ENCODE measurements at regions of chr10 and their contacts with region 1.

Region 1: GRCh38 chr10:30591249-30591670 is 38.3 kb downstream of the LYZL2 start:
- DNase-seq: peak; percentile 62
- H3K4me3 ChIP-seq: no peak overlapping the region
- H3K27ac ChIP-seq: no peak overlapping the region
- H3K4me1 ChIP-seq: no peaks in the 10 kb centered on the region; a peak in 1 of 4 replicates
- H3K27me3 ChIP-seq: no peaks in the 10 kb centered on the region; the same call in 1 of the 2 replicates
- CTCF ChIP-seq: peak; percentile 87
- EP300 ChIP-seq: no peak
- RAD21 ChIP-seq: peak; percentile 87

Region 2: GRCh38 chr10:30384701-30385201 is 206.5 kb before region 1 on chr10:
- CTCF ChIA-PET with region 1: interaction called, 59 read pairs
- POLR2A ChIA-PET with region 1: no interaction called
- DNase-seq: peak; percentile 68
- H3K4me3 ChIP-seq: no peak overlapping the region; a peak in 1 of 4 replicates
- H3K27ac ChIP-seq: no peak overlapping the region
- H3K4me1 ChIP-seq: peaks cover 0 to 7% of the 10 kb centered on the region in 2 experiments; a peak in 1 of 4 replicates
- H3K27me3 ChIP-seq: no peaks in the 10 kb centered on the region
- CTCF ChIP-seq: peak; percentile 52
- EP300 ChIP-seq: no peak
- RAD21 ChIP-seq: peak; percentile 59

Region 3: DNA sequence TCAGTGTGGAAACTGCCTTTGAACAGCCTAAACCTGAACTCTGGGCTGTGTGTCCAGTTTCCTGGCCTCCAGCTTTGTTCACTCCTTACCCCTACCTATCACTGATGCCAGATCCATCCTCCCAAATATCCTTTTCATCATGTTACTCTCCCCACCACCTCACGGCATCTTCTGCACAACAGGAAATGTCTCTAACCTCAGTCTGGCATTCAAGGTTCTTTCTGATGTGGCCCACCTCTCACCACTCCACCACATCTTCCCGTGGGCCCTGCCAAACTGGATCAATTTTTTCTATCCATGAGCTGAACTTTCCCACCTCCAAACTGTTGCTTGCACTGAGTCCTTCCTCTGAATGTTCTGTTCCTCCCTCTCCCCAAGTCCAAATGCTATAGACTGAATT is 193.1 kb before region 1 on chr10:
- CTCF ChIA-PET with region 1: interaction called, 59 read pairs
- POLR2A ChIA-PET with region 1: no interaction called
- DNase-seq: no peak
- H3K4me3 ChIP-seq: no peak overlapping the region
- H3K27ac ChIP-seq: no peak overlapping the region
- H3K4me1 ChIP-seq: peaks cover 0 to 11% of the 10 kb centered on the region in 2 experiments; a peak in 1 of 4 replicates
- H3K27me3 ChIP-seq: peaks cover 7% of the 10 kb centered on the region; the same call in 1 of the 2 replicates
- CTCF ChIP-seq: no peak
- EP300 ChIP-seq: no peak
- RAD21 ChIP-seq: no peak

Region 4: DNA sequence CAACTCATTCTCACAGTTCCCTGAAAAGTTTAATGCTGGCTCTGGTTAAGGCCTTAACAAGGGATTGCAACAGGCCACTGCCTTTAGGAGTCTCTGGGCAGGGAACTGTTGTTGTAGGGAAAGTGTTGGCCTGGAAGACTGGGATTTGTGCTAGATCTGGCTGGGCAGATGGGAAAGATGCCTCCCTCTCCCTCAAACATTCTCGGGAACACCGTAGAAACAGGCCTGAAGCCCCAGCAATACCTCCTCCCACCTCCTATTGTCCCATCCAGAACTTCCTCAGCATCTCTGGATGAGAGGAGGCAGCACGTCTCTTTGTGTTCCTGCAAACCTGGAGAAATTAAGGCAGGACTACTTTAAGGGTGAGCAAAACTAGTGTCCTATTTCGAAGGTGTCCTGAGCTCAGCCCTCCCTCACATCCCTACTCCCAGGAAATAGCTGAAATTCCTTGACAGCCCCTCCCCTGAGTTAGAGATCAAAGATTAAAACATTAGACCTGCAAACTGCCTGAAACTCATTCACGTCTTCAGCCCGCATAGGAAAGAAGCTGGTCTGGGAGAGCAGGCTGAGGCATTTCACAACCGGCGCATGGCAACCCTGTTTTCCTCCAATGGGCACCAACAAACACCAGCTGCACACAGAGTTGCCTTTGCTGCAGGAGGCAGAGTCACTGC is 168.1 kb before region 1 on chr10:
- CTCF ChIA-PET with region 1: interaction called, 23 read pairs
- POLR2A ChIA-PET with region 1: no interaction called
- DNase-seq: no peak
- H3K4me3 ChIP-seq: no peak overlapping the region
- H3K27ac ChIP-seq: peak overlapping the region in 1 of 2 experiments; percentile 21; a peak in 1 of 4 replicates
- H3K4me1 ChIP-seq: peaks cover 0 to 9% of the 10 kb centered on the region in 2 experiments; a peak in 2 of 4 replicates
- H3K27me3 ChIP-seq: no peaks in the 10 kb centered on the region
- CTCF ChIP-seq: no peak
- EP300 ChIP-seq: no peak
- RAD21 ChIP-seq: no peak

Region 5: GRCh38 chr10:31437959-31438358 is 846.7 kb after region 1 on chr10:
- CTCF ChIA-PET with region 1: no interaction called
- POLR2A ChIA-PET with region 1: no interaction called
- DNase-seq: no peak
- H3K4me3 ChIP-seq: no peak overlapping the region
- H3K27ac ChIP-seq: no peak overlapping the region
- H3K4me1 ChIP-seq: no peaks in the 10 kb centered on the region
- H3K27me3 ChIP-seq: no peaks in the 10 kb centered on the region
- CTCF ChIP-seq: no peak
- EP300 ChIP-seq: no peak
- RAD21 ChIP-seq: no peak

Measured in SK-N-SH (cell line).